ENCODE measurements at regions of chr16 and their contacts with region 1.

Region 1: DNA sequence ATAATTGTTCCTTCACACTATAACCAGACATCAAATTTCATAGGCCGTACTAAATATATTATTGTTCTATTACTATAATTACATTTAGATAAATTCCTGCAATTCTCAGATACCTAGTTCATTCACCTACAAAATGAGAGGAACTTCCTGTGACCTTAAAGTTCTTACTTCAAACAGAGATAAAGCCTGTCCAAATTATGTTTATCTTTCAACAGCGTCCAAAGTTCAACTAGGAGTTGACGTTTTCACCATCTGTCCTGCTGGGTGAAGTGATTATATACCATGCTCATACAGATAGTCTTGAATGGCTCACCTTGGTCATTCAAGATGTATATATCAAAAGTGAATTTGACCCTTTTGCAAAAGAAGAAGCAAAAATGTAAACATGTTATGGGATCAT is 440.6 kb downstream of the CDH8 start:
- DNase-seq: no peak
- ATAC-seq: no peak
- H3K4me3 ChIP-seq: no peak overlapping the region
- H3K4me3 Mint-ChIP-seq: no peak overlapping the region
- H3K27ac ChIP-seq: no peak overlapping the region
- H3K27ac Mint-ChIP-seq: no peak overlapping the region
- H3K4me1 ChIP-seq: no peaks in the 10 kb centered on the region
- H3K4me1 Mint-ChIP-seq: no peaks in the 10 kb centered on the region
- H3K27me3 ChIP-seq: no peaks in the 10 kb centered on the region
- H3K27me3 Mint-ChIP-seq: no peaks in the 10 kb centered on the region
- CTCF ChIP-seq: no peak

Region 2: DNA sequence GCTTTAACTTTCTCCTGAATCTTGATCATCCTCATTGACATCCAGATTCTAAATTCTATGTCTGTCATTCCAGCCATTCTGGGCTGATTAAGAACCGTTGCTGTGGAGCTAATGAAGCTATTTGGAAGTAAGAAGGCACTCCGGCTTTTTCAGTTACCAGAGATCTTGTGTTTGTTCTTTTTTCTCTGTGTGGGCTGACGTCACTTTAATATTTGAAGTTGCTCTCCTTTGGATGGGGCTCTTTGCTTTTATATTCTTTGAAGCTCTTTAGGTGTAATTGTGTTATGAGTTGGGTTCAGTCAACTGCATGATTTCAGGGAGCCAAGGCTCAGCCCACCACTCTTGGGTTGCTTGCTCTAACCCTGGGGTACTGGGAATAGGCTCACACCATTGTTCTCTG is 20.0 kb before region 1 on chr16:
- intact Hi-C with region 1: loop called (anchors 2 kb)
- DNase-seq: no peak
- ATAC-seq: no peak
- H3K4me3 ChIP-seq: no peak overlapping the region
- H3K4me3 Mint-ChIP-seq: no peak overlapping the region
- H3K27ac ChIP-seq: no peak overlapping the region
- H3K27ac Mint-ChIP-seq: no peak overlapping the region
- H3K4me1 ChIP-seq: no peaks in the 10 kb centered on the region
- H3K4me1 Mint-ChIP-seq: no peaks in the 10 kb centered on the region
- H3K27me3 ChIP-seq: no peaks in the 10 kb centered on the region
- H3K27me3 Mint-ChIP-seq: no peaks in the 10 kb centered on the region
- CTCF ChIP-seq: no peak

Region 3: DNA sequence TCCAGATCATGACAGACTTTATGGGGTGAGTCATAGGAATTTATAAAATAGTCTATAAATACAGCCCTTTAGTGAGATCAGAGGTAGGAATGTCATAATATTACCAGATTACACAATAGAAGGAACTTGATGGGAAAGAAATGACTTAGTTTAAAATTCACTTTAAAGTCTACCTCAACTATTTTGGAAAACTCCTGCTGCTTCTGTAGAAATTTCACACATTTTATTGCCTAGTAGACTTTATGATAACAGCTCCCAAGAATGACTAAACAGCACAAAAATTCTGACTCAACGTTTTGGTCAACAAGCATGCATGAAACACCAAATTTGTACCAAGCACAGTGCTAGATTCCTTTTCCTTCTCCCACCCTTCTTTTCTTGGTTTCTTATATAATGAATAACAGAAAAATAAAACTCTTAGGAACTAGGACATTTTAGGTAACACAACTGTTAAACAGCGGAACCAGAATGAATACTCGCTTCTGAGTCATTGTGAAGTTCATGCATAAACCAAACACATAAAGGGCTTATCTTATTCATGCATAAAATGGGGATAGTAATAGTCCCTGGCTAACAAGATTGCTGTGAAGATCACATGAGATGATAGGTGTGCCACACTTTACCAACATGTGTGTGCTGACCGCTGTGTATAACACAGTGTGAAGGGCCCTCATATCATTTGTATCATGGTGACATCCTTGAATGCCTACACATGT is 196.7 kb after region 1 on chr16:
- intact Hi-C with region 1: no loop called
- DNase-seq: no peak
- ATAC-seq: no peak
- H3K4me3 ChIP-seq: no peak overlapping the region
- H3K4me3 Mint-ChIP-seq: no peak overlapping the region
- H3K27ac ChIP-seq: no peak overlapping the region
- H3K27ac Mint-ChIP-seq: no peak overlapping the region
- H3K4me1 ChIP-seq: no peaks in the 10 kb centered on the region
- H3K4me1 Mint-ChIP-seq: no peaks in the 10 kb centered on the region
- H3K27me3 ChIP-seq: no peaks in the 10 kb centered on the region
- H3K27me3 Mint-ChIP-seq: no peaks in the 10 kb centered on the region
- CTCF ChIP-seq: no peak